ENCODE measurements at regions of chr7 and their contacts with region 1.

Region 1: DNA sequence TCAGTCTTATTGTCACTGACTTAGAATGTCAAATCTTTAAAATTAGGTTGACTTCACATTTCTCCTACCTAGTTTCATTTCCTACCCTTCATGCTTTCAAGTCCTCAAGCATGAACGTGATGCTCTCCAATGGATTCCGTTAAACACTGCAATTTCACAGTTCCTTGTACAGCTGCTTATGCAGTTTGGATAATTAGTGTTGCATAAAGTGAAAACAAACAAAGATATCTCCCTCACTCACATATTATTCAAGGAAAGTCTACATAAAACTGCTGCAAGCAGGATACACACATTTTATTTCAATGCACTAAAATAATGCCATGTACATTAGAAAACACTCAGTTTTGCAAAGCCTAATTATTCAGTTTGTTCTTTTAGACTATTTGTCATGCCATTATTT is 214.0 kb downstream of the CRPPA start:
- DNase-seq: no peak
- ATAC-seq: no peak

Region 2: DNA sequence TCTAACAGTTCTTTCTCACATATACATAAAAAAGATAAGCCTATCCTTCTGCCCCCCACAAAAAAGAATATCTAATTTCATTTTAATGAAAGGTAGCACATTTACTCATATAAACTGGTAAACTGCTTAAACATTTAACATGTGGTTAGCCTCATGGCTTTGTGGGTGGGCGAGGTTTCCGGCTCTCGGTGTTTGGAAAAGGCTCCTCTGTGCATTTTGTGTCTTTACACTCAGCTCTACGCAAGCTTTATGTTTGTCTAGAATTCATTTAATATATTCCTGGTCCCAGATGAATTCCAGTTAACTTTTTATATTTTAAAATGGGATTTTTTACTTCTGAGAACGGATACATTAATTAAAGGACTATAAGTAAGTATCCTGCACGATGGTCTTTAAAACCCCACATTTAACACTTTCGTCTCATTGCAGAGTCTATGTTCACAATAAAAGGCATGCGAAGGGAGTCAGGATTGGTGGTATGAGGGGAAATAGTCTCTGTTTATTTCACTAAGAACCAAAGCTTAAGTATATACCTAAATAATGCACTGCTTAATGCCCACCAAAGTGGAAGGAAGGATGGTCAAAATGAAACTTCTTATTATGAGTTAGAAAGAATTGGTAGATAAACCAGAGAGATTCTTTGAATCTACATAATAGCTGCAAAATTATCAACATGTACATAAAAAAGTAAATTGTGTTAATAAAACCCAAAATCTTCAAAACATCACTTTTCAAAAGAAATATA is 16.8 kb after region 1 on chr7:
- intact Hi-C with region 1: loop called (anchors 2 kb)
- DNase-seq: no peak
- ATAC-seq: no peak

Region 3: GRCh38 chr7:16695621-16696237 is 488.4 kb after region 1 on chr7:
- intact Hi-C with region 1: no loop called
- DNase-seq: no peak
- ATAC-seq: peak; percentile 76

Measured in left ventricle myocardium superior (tissue), 1 donor.